A549 (cell line): ENCODE measurements at regions of chr10 and their contacts with region 1.

Region 1: DNA sequence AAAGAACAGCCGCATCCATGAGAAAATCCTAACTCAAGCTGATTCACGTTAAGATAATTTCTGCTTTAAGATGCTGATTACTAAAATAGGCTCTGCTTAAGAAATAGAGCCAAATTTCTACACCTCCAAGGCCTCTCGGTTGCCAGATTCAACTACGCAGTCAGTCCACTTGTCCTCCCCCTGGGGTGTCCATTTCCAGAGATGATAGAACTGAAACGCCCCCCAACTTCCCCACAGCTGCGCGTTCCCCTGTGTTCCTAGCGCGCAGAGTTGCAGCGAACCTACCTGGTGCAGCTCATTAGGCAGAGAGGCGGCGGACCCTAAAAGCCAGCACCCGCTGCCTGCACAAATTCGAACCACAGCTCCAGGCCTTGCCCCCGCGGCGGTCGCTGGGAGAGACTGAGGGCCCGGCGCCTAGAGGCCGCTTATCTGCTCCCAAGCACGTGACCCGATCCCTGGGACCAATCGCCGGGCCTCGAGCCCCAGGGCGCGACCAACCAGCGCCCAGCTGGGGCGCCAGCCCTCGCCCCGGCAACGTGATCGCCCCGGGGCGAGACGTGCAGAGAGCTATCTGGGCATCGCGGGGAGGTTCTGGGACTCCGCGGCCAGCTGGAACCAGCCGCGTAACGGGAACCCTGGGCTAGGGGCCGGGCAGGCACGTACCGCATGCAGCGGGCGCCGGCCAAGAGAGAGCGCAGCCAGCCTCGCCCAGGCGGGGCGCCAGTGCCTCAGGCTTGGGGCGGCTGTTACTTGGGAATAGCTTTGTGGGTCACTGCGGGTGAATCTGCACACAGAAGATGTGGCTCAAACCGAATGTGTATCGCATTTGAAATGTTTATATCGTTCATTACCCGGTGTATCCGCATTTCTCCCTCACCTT is at the start of gene PPP1R3C:
- DNase-seq: peak; percentile 91 to 93
- ATAC-seq: peak; percentile 97 to 98
- H3K4me3 ChIP-seq: peak within 1 kb of the TSS; percentile 85
- H3K27ac ChIP-seq: peak within 1 kb of the TSS; percentile 76 to 84
- H3K4me1 ChIP-seq: peaks cover 31% of the 10 kb centered on the region; the same call in 2 of the 3 replicates
- CTCF ChIP-seq: peak; percentile 36
- EP300 ChIP-seq: no peak
- POLR2A ChIP-seq: peak; percentile 81
- RAD21 ChIP-seq: peak; percentile 61 to 74
- polyA plus RNA-seq, gene PPP1R3C: 19.7 and 20.0 TPM in 2 replicates

Region 2: GRCh38 chr10:91137822-91138221 is 495.1 kb before region 1 on chr10:
- CTCF ChIA-PET with region 1: no interaction called
- POLR2A ChIA-PET with region 1: no interaction called
- DNase-seq: no peak
- ATAC-seq: no peak
- H3K4me3 ChIP-seq: no peak overlapping the region
- H3K27ac ChIP-seq: no peak overlapping the region
- H3K4me1 ChIP-seq: peaks cover 14% of the 10 kb centered on the region; the same call in 2 of the 3 replicates
- CTCF ChIP-seq: no peak
- EP300 ChIP-seq: no peak
- POLR2A ChIP-seq: no peak
- RAD21 ChIP-seq: no peak

Region 3: GRCh38 chr10:91298224-91298871 is 334.6 kb before region 1 on chr10:
- CTCF ChIA-PET with region 1: interaction called, 12 read pairs
- POLR2A ChIA-PET with region 1: no interaction called
- DNase-seq: peak; percentile 68 to 78
- ATAC-seq: peak; percentile 91 to 96
- H3K4me3 ChIP-seq: 0 out of 3 replicates have a peak overlapping the region, but pooled peaks have one; percentile 14
- H3K27ac ChIP-seq: peak overlapping the region; percentile 28 to 64; a peak in 5 of 6 replicates
- H3K4me1 ChIP-seq: peaks cover 7% of the 10 kb centered on the region; the same call in 1 of the 3 replicates
- CTCF ChIP-seq: peak; percentile 94
- EP300 ChIP-seq: no peak
- POLR2A ChIP-seq: no peak
- RAD21 ChIP-seq: peak; percentile 94 to 95

Region 4: GRCh38 chr10:91487911-91488582 is 144.9 kb before region 1 on chr10:
- CTCF ChIA-PET with region 1: interaction called, 116 read pairs
- POLR2A ChIA-PET with region 1: interaction called, 3 read pairs
- DNase-seq: no peak
- ATAC-seq: no peak
- H3K4me3 ChIP-seq: no peak overlapping the region
- H3K27ac ChIP-seq: no peak overlapping the region
- H3K4me1 ChIP-seq: no peaks in the 10 kb centered on the region
- CTCF ChIP-seq: no peak
- EP300 ChIP-seq: no peak
- POLR2A ChIP-seq: no peak
- RAD21 ChIP-seq: no peak

Region 5: GRCh38 chr10:91582153-91582554 is 50.8 kb before region 1 on chr10:
- CTCF ChIA-PET with region 1: interaction called, 12 read pairs
- POLR2A ChIA-PET with region 1: interaction called, 8 read pairs
- DNase-seq: no peak
- ATAC-seq: no peak
- H3K4me3 ChIP-seq: no peak overlapping the region
- H3K27ac ChIP-seq: 0 out of 6 replicates have a peak overlapping the region, but pooled peaks of 1 of the 2 experiments have one; percentile 14
- H3K4me1 ChIP-seq: peaks cover under 1% of the 10 kb centered on the region; the same call in 2 of the 3 replicates
- CTCF ChIP-seq: no peak
- EP300 ChIP-seq: no peak
- POLR2A ChIP-seq: no peak
- RAD21 ChIP-seq: no peak

Region 6: GRCh38 chr10:91613411-91614253 is 19.3 kb before region 1 on chr10:
- CTCF ChIA-PET with region 1: interaction called, 38 read pairs
- POLR2A ChIA-PET with region 1: interaction called, 10 read pairs
- DNase-seq: peak; percentile 81 to 82
- ATAC-seq: peak; percentile 91 to 92
- H3K4me3 ChIP-seq: no peak overlapping the region
- H3K27ac ChIP-seq: peak overlapping the region; percentile 65 to 80
- H3K4me1 ChIP-seq: peaks cover 54% of the 10 kb centered on the region
- CTCF ChIP-seq: no peak
- EP300 ChIP-seq: no peak
- POLR2A ChIP-seq: no peak
- RAD21 ChIP-seq: no peak

Region 7: GRCh38 chr10:91745074-91745832 is 112.3 kb after region 1 on chr10:
- CTCF ChIA-PET with region 1: interaction called, 23 read pairs
- POLR2A ChIA-PET with region 1: no interaction called
- DNase-seq: peak; percentile 22 to 72
- ATAC-seq: peak; percentile 99 to 100
- H3K4me3 ChIP-seq: peak overlapping the region; percentile 28; the same call in 2 of the 3 replicates
- H3K27ac ChIP-seq: peak overlapping the region; percentile 43 to 61; a peak in 5 of 6 replicates
- H3K4me1 ChIP-seq: peaks cover 5% of the 10 kb centered on the region; the same call in 1 of the 3 replicates
- CTCF ChIP-seq: peak; percentile 65
- EP300 ChIP-seq: no peak
- POLR2A ChIP-seq: no peak
- RAD21 ChIP-seq: peak; percentile 88 to 90

Region 8: DNA sequence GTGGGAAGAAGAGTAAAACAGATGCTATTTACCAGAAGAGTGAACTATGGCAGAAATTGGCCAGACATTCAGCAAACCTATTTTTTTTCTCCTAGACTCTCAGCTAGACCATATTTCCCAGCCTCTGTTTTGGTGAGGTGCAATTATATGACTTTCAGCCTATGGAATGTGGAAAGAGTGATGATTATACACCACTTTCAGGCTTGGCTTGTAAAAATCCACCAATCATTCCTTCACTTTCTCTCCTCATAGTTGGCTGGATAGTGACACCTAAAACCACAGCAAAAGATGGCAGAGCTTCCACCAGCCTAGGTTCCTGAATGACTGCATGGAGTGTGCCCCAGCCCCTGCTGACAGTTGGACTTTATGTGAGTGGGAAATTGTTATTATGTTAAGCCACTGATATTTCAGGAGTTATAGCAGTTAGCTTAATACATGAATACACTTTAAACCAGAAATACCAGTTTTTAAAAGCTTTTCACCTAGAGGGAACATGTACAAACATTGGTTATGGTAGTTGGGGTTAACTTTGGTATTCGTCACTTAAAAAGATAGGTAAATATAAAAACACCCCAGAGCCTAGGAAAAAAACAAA is 146.2 kb after region 1 on chr10:
- CTCF ChIA-PET with region 1: no interaction called
- POLR2A ChIA-PET with region 1: no interaction called
- DNase-seq: no peak
- ATAC-seq: no peak
- H3K4me3 ChIP-seq: no peak overlapping the region
- H3K27ac ChIP-seq: no peak overlapping the region
- H3K4me1 ChIP-seq: no peaks in the 10 kb centered on the region
- CTCF ChIP-seq: no peak
- EP300 ChIP-seq: no peak
- POLR2A ChIP-seq: no peak
- RAD21 ChIP-seq: no peak

Region 9: DNA sequence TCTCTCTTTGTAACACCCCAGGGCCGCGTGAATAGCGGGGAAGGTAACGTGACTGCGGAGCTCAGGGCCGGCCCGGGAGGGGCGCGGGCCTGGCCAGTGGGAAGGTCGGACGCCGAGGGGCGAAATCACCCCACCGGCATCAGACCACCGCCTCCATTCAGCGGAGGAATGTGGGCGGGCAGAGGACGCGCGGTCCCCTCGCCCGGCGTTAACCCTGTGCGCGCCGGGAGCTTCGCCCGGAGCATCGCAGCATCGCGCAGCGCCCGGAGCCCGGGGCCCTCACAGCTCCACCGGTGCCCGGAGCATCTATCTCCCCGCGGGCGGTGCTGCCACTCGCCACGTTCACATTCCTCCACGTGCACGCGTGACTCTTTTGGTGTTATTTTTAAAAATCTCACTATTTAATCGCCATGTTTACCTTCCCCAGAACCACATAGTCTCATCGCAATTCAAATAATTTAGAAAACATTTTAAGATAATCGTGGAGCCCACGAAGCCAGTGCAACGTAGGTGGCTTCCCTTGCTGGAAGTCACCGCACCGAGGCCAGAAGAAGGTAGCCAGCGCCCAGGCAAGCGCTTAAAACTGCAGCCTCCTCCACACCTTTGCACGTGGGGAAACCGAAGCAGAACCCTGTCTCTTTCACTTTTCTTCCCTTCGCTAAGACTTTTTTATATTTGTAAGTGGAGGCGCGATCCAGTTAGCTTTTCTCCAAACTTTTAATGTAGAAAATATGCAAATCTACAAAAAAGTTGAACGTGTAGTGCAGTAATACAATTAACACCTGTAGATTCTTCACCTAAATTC is 254.6 kb after region 1 on chr10:
- CTCF ChIA-PET with region 1: no interaction called
- POLR2A ChIA-PET with region 1: no interaction called
- DNase-seq: peak; percentile 37 to 57
- ATAC-seq: peak; percentile 77 to 87
- H3K4me3 ChIP-seq: peak overlapping the region; percentile 50
- H3K27ac ChIP-seq: peak overlapping the region; percentile 55 to 78; a peak in 5 of 6 replicates
- H3K4me1 ChIP-seq: peaks cover 17% of the 10 kb centered on the region
- CTCF ChIP-seq: no peak
- EP300 ChIP-seq: no peak
- POLR2A ChIP-seq: no peak
- RAD21 ChIP-seq: no peak

Region 10: DNA sequence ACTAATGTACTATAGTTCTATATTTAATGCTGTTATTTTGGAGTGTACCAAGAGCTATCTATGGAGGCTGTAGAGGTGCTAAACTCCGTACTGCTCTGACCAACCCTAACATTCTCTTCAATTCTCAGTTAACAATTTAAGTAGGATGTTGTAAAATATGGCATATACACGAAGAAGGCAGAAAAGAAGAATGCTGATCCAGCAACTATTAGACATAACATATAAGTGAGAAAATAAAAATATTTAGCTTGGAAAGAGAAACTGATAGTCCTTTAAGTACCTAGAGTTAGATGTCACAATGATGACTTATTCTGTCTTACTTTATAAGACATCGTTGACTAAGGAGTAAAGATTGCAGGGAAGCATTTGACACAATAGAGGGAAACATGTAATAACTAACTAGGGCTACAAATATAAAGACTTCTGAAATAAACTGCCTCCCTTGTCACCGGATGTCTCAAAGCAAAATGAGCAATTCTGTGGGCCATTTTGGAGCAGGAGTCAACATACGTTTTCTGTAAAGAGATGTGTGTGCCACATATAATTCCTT is 498.4 kb after region 1 on chr10:
- CTCF ChIA-PET with region 1: no interaction called
- POLR2A ChIA-PET with region 1: no interaction called
- DNase-seq: peak in 1 of 2 experiments; percentile 5
- ATAC-seq: no peak
- H3K4me3 ChIP-seq: no peak overlapping the region
- H3K27ac ChIP-seq: no peak overlapping the region
- H3K4me1 ChIP-seq: peaks cover 10% of the 10 kb centered on the region
- CTCF ChIP-seq: no peak
- EP300 ChIP-seq: no peak
- POLR2A ChIP-seq: no peak
- RAD21 ChIP-seq: no peak